BJ (cell line): ENCODE measurements at regions of chr3 and their contacts with region 1.

Region 1: GRCh38 chr3:186742618-186743380 is 25.6 kb downstream of the KNG1 start:
- DNase-seq: no peak
- H3K4me3 ChIP-seq: no peak overlapping the region
- H3K27me3 ChIP-seq: no peaks in the 10 kb centered on the region
- CTCF ChIP-seq: no peak

Region 2: GRCh38 chr3:185878920-185879319 is 863.9 kb before region 1 on chr3:
- CTCF ChIA-PET with region 1: no interaction called
- POLR2A ChIA-PET with region 1: interaction called, 24 read pairs
- DNase-seq: no peak
- H3K4me3 ChIP-seq: no peak overlapping the region
- H3K27me3 ChIP-seq: no peaks in the 10 kb centered on the region
- CTCF ChIP-seq: no peak